Uterus (tissue), 4 donors: ENCODE measurements at regions of chr14 and their contacts with region 1.

Region 1: DNA sequence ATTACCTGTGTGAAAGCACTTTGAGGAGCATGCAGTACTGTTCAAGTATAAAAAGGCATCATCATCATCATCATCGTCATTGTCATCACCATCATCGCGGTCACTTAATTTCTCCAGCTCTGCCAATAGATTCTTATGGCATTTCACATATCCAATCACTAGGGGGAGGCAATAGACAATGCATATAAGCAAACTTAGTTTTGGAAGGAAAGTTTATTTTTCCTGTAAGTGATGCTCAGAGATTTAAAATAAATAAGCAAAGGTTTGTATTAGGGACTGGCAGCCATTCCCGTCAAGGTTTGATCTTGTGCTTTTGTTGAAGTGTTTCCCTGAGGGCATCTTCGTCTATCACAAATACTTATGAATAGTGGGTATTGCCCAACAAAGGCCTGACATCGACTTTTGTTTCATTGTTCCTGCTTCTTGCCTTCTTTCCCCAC is 127.4 kb downstream of the KTN1 start:
- DNase-seq: no peak
- H3K4me3 ChIP-seq: no peak overlapping the region
- H3K27ac ChIP-seq: no peak overlapping the region
- H3K4me1 ChIP-seq: no peaks in the 10 kb centered on the region
- H3K27me3 ChIP-seq: no peaks in the 10 kb centered on the region
- CTCF ChIP-seq: peak; percentile 39 to 70 (median 55)
- POLR2A ChIP-seq: no peak

Region 2: DNA sequence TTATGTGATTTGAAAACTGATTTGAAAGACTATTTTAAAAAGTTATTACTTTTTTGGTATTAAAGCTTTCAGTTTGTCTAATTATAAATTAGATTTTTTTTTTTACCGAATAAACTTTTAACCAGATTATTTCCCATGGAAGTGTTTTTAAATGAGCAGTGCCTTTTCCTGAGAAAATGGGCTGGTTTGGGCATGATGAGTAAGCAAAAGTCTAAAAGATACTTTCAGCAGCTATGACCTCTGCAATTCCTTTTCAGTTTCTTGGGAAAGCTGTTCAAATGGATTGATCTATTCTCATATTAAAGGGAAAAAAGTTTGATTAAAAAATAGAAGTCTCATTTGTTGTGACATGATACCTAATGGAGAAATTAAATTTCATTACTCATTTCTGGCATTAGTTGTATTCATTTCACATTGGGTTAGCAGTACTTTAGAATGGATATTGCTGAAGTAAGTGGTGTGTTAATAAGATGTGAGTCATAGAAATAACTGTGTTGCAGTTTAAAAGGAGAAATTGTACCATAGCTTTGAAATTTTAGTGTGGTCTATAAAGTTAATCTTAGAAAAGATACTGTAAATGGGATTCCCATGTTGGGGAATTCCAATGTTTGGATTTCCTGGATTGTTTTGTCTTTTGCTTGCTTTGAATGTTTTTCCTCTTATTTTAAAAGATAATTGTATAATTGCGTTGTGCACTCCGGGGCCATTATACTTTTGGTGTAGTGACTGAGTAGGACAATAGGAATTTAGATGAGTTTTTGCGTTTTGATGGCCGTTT is 106.4 kb before region 1 on chr14:
- intact Hi-C with region 1: no loop called
- DNase-seq: no peak
- H3K4me3 ChIP-seq: no peak overlapping the region
- H3K27ac ChIP-seq: no peak overlapping the region
- H3K4me1 ChIP-seq: peaks cover 0 to 3% of the 10 kb centered on the region in 2 donors
- H3K27me3 ChIP-seq: no peaks in the 10 kb centered on the region
- CTCF ChIP-seq: no peak
- POLR2A ChIP-seq: no peak

Region 3: GRCh38 chr14:56474419-56475022 is 767.1 kb after region 1 on chr14:
- intact Hi-C with region 1: loop called (anchors 10 kb)
- DNase-seq: no peak
- H3K4me3 ChIP-seq: no peak overlapping the region
- H3K27ac ChIP-seq: no peak overlapping the region
- H3K4me1 ChIP-seq: no peaks in the 10 kb centered on the region
- H3K27me3 ChIP-seq: no peaks in the 10 kb centered on the region
- CTCF ChIP-seq: peak; percentile 71 to 81 (median 78)
- POLR2A ChIP-seq: no peak